ENCODE measurements at regions of chr7 and their contacts with region 1.

Region 1: GRCh38 chr7:131225619-131226513 is 101.8 kb upstream of the MKLN1 start:
- DNase-seq: peak in 1 of 10 donors; percentile 6
- H3K4me3 ChIP-seq: no peak overlapping the region
- H3K27ac ChIP-seq: peak overlapping the region in 54 of 59 donors; percentile 9 to 81 (median 54)
- H3K27me3 ChIP-seq: no peaks in the 10 kb centered on the region
- CTCF ChIP-seq: no peak

Region 2: DNA sequence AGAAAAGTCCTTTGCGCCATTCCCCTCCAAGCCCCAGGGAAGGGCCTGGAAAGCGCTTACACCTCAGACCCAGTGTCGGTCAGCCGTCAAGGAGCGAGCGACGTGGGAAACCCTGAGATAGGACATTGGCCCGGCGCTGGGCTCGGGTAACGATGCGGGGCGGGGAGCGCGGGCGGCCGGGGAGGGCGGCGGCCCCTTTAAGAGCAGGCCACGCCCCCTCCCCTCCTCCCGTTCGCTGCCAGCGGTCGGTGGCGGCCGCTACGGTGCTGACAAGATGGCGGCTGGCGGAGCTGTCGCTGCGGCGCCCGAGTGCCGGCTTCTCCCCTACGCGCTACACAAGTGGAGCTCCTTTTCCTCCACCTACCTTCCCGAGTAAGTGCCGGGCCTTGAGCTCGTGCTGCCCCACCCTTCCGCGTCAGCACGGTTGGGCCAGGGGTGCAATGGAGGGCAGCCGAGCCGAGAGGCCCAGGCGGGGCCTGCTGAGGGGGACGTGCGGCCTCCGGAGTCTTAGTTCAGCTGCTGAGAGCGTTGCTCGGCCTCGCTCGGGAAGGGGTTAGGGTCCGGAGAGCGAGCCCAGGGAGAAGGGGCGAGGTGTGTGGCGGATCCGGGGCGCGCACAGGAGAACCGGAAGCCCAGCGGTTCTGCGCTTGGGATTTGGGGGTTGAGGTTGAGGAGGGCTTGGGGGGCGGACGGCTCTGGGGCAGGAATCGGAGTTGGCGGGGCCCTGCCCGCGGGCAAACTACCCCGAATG is 101.9 kb after region 1 on chr7 and contains the start of gene MKLN1:
- intact Hi-C with region 1: loop called in 1 of 2 experiments (anchors 10 kb)
- DNase-seq: peak; percentile 82 to 94 (median 89)
- H3K4me3 ChIP-seq: peak within 1 kb of the TSS; percentile 63 to 100 (median 94)
- H3K27ac ChIP-seq: peak within 1 kb of the TSS; percentile 89 to 100 (median 98)
- H3K27me3 ChIP-seq: no peaks in the 10 kb centered on the region
- CTCF ChIP-seq: peak in 22 of 56 donors; percentile 6 to 53 (median 24)
- total RNA-seq, gene MKLN1: 68.7 to 162 (median 107) TPM

Region 3: GRCh38 chr7:131424219-131424822 is 198.5 kb after region 1 on chr7:
- intact Hi-C with region 1: loop called in 1 of 2 experiments (anchors 10 kb)
- DNase-seq: no peak
- H3K4me3 ChIP-seq: no peak overlapping the region
- H3K27ac ChIP-seq: peak overlapping the region in 57 of 59 donors; percentile 13 to 94 (median 85)
- H3K27me3 ChIP-seq: no peaks in the 10 kb centered on the region
- CTCF ChIP-seq: peak; percentile 59 to 90 (median 79)